Calu3 (cell line): ENCODE measurements at regions of chr18 and their contacts with region 1.

Region 1: GRCh38 chr18:56869189-56869777 is 218.1 kb downstream of the WDR7 start:
- DNase-seq: peak; percentile 44
- H3K4me3 Mint-ChIP-seq: no peak overlapping the region
- H3K27ac Mint-ChIP-seq: peak overlapping the region; percentile 86
- H3K4me1 Mint-ChIP-seq: peaks cover 28% of the 10 kb centered on the region
- H3K27me3 Mint-ChIP-seq: no peaks in the 10 kb centered on the region
- CTCF ChIP-seq: peak; percentile 74

Region 2: GRCh38 chr18:56443166-56443907 is 425.9 kb before region 1 on chr18:
- CTCF ChIA-PET with region 1: no interaction called
- intact Hi-C with region 1: no loop called
- DNase-seq: no peak
- H3K4me3 Mint-ChIP-seq: no peak overlapping the region
- H3K27ac Mint-ChIP-seq: no peak overlapping the region
- H3K4me1 Mint-ChIP-seq: peaks cover 6% of the 10 kb centered on the region
- H3K27me3 Mint-ChIP-seq: peaks cover 71% of the 10 kb centered on the region
- CTCF ChIP-seq: no peak

Region 3: GRCh38 chr18:56910967-56911366 is 41.7 kb after region 1 on chr18:
- CTCF ChIA-PET with region 1: no interaction called
- intact Hi-C with region 1: no loop called
- DNase-seq: no peak
- H3K4me3 Mint-ChIP-seq: no peak overlapping the region
- H3K27ac Mint-ChIP-seq: no peak overlapping the region
- H3K4me1 Mint-ChIP-seq: peaks cover 40% of the 10 kb centered on the region
- H3K27me3 Mint-ChIP-seq: no peaks in the 10 kb centered on the region
- CTCF ChIP-seq: no peak

Region 4: DNA sequence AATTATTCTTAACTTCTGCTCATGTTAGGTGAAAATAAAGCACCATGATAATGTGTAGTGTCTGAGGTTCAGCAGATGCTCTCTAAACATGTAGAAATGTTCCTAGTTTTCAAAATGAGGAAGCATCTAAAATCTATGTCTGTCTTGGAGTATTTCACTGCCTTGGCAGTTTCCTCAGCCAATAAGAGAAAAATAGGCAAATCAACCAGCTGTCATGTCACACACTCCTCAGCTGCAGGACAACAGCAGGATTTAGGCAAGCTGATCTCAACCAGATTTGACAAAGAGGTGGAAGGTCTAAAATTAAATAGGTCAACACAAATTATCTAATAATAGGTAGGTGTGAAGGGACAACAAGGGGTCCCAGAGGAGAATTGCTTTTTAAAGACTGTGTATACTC is 113.5 kb after region 1 on chr18:
- CTCF ChIA-PET with region 1: interaction called, 3 read pairs
- intact Hi-C with region 1: loop called (anchors 5 kb)
- DNase-seq: no peak
- H3K4me3 Mint-ChIP-seq: no peak overlapping the region
- H3K27ac Mint-ChIP-seq: no peak overlapping the region
- H3K4me1 Mint-ChIP-seq: peaks cover 12% of the 10 kb centered on the region
- H3K27me3 Mint-ChIP-seq: no peaks in the 10 kb centered on the region
- CTCF ChIP-seq: no peak

Region 5: DNA sequence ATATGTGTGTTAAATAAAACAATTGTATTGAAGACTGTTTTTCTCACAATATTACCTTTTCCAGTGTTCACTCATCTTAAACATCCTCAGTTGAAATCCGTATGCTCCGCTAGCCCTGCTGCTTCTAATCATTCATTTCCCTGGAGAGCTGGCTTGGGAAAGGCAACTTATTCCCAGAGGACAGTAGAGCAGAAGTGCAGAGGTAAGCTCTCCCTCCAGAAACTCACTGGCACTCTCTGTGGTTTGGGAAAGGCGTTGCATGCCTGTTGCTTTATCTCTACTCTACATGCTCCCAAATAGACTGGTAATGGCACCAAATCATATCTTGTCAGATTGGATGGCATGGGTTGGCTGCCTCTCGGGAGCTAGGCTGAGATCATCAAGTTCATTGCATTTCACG is 160.5 kb after region 1 on chr18:
- CTCF ChIA-PET with region 1: no interaction called
- intact Hi-C with region 1: loop called (anchors 2 kb)
- DNase-seq: peak; percentile 8
- H3K4me3 Mint-ChIP-seq: no peak overlapping the region
- H3K27ac Mint-ChIP-seq: no peak overlapping the region
- H3K4me1 Mint-ChIP-seq: peaks cover 12% of the 10 kb centered on the region
- H3K27me3 Mint-ChIP-seq: no peaks in the 10 kb centered on the region
- CTCF ChIP-seq: no peak

Region 6: DNA sequence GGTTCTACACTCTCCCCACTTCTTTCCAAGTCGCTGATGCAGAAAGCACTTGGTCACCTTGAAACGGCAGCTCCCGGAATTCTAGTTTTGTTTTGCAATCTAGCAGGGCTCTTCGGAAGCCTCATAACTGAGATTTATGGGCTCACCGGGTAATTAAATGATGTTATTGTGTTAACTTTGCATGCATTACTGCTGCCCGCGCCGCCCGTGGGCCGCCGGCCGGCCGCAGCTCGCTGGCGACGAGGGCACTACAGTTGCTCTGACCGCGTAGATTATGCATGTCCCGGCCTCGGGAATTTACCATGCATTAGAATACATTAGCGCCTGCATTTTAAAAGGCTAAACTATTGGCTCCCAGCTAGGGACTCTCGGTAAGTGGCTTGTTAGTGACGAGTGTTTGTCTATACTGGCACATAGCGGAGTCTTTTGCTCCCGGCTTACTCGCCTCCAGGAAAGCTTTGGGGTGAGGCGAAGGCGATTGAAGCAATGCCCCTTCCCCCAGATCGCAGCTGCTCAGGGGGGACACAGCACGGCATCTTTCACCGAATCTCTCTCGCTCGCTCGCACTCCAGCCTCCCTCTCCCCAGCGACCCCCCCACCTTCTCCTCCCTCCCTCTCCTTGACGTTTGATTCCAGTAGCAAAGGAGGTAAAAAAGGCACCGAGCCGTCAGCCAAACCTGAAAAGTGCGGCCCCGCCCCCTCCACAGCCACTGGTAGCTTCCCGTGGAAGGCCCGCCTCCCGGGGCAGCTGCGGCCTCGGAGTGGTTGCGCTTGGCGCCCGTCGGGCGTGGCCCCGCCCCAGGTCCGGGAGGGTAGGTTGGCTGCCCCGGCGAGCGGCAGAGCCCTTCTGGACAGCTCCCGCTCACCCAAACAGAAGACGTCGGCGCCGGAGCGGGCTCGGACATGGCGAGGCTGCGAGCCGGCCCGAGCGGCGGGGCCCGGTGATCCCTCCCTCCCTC is 565.5 kb after region 1 on chr18 and contains the start of gene ONECUT2:
- CTCF ChIA-PET with region 1: interaction called, 10 read pairs
- intact Hi-C with region 1: loop called (anchors 2 kb)
- DNase-seq: peak; percentile 100
- H3K4me3 Mint-ChIP-seq: peak within 1 kb of the TSS; percentile 96
- H3K27ac Mint-ChIP-seq: peak within 1 kb of the TSS; percentile 79
- H3K4me1 Mint-ChIP-seq: no peaks in the 10 kb centered on the region
- H3K27me3 Mint-ChIP-seq: no peaks in the 10 kb centered on the region
- CTCF ChIP-seq: no peak
- total RNA-seq, gene ONECUT2: 182 and 209 TPM in 2 replicates